Caco-2 (cell line): ENCODE measurements at regions of chr5 and their contacts with region 1.

Region 1: DNA sequence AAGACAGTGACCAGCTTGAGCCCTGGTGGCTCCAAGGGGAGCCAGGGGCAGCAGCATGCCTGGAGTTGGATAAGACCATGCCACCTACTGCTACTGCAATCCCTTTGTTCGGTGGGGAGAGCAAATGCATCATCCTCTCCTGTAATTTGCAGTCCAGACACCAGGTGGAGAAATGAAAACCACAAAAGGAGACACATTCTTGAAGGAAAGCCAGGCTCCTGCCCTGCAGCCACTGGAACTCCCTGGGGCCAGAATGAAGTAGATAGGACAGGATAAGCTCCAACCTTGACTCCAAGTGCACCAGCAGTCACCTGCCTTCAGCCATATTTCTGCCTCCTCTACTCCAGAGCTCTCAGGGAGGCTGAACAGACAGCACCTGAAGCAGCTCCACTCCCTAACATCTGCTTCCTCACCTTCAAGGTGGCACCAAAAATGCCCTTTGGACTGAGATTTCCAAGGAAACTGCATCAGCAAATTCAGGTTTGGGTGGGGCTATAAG is 65.1 kb upstream of the IQGAP2 start:
- DNase-seq: peak; percentile 83 to 89
- H3K4me3 ChIP-seq: no peak overlapping the region
- H3K4me3 Mint-ChIP-seq: no peak overlapping the region
- H3K27ac Mint-ChIP-seq: peak overlapping the region; percentile 69
- H3K4me1 ChIP-seq: peaks cover 35% of the 10 kb centered on the region
- H3K4me1 Mint-ChIP-seq: peaks cover 32% of the 10 kb centered on the region
- H3K27me3 ChIP-seq: no peaks in the 10 kb centered on the region
- H3K27me3 Mint-ChIP-seq: no peaks in the 10 kb centered on the region
- CTCF ChIP-seq: peak; percentile 52 to 58

Region 2: DNA sequence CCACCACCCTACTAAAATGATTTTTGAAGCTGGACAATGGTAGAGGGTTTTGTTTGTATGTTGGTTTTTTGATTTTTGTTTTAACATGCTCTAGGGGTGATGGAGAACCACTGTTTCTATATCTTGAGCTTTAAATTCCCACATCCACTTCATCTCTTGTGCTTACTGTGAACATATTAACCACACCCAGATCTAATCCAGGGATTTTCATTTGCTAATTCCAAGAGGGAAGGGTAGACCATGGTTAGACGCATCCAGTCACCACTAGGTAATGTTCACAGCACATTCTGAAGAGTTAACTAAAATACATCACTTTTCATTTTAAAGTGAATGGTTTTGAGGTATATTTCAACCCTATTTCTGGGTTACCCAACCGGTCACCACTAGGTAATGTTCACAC is 28.6 kb after region 1 on chr5:
- CTCF ChIA-PET with region 1: interaction called, 13 read pairs
- POLR2A ChIA-PET with region 1: no interaction called
- intact Hi-C with region 1: no loop called
- DNase-seq: no peak
- H3K4me3 ChIP-seq: no peak overlapping the region
- H3K4me3 Mint-ChIP-seq: no peak overlapping the region
- H3K27ac Mint-ChIP-seq: no peak overlapping the region
- H3K4me1 ChIP-seq: peaks cover 4% of the 10 kb centered on the region; the same call in 1 of the 2 replicates
- H3K4me1 Mint-ChIP-seq: peaks cover 12% of the 10 kb centered on the region
- H3K27me3 ChIP-seq: no peaks in the 10 kb centered on the region
- H3K27me3 Mint-ChIP-seq: no peaks in the 10 kb centered on the region
- CTCF ChIP-seq: no peak

Region 3: GRCh38 chr5:76372323-76373054 is 34.5 kb after region 1 on chr5:
- CTCF ChIA-PET with region 1: no interaction called
- POLR2A ChIA-PET with region 1: no interaction called
- intact Hi-C with region 1: loop called (anchors 1 kb)
- DNase-seq: peak; percentile 71 to 80
- H3K4me3 ChIP-seq: no peak overlapping the region
- H3K4me3 Mint-ChIP-seq: peak overlapping the region; percentile 20
- H3K27ac Mint-ChIP-seq: peak overlapping the region; percentile 73
- H3K4me1 ChIP-seq: peaks cover 18% of the 10 kb centered on the region
- H3K4me1 Mint-ChIP-seq: peaks cover 33% of the 10 kb centered on the region
- H3K27me3 ChIP-seq: no peaks in the 10 kb centered on the region
- H3K27me3 Mint-ChIP-seq: no peaks in the 10 kb centered on the region
- CTCF ChIP-seq: no peak

Region 4: GRCh38 chr5:76544268-76544926 is 206.4 kb after region 1 on chr5:
- CTCF ChIA-PET with region 1: interaction called, 4 read pairs
- POLR2A ChIA-PET with region 1: no interaction called
- intact Hi-C with region 1: loop called (anchors 1 kb)
- DNase-seq: peak; percentile 69 to 77
- H3K4me3 ChIP-seq: no peak overlapping the region
- H3K4me3 Mint-ChIP-seq: no peak overlapping the region
- H3K27ac Mint-ChIP-seq: peak overlapping the region; percentile 51
- H3K4me1 ChIP-seq: peaks cover 76% of the 10 kb centered on the region
- H3K4me1 Mint-ChIP-seq: peaks cover 35% of the 10 kb centered on the region
- H3K27me3 ChIP-seq: no peaks in the 10 kb centered on the region
- H3K27me3 Mint-ChIP-seq: no peaks in the 10 kb centered on the region
- CTCF ChIP-seq: peak; percentile 68 to 87

Region 5: GRCh38 chr5:76582230-76583162 is 244.5 kb after region 1 on chr5:
- CTCF ChIA-PET with region 1: interaction called, 3 read pairs
- POLR2A ChIA-PET with region 1: no interaction called
- intact Hi-C with region 1: loop called (anchors 1 kb)
- DNase-seq: no peak
- H3K4me3 ChIP-seq: no peak overlapping the region
- H3K4me3 Mint-ChIP-seq: no peak overlapping the region
- H3K27ac Mint-ChIP-seq: no peak overlapping the region
- H3K4me1 ChIP-seq: peaks cover 33% of the 10 kb centered on the region
- H3K4me1 Mint-ChIP-seq: peaks cover 21% of the 10 kb centered on the region
- H3K27me3 ChIP-seq: no peaks in the 10 kb centered on the region
- H3K27me3 Mint-ChIP-seq: no peaks in the 10 kb centered on the region
- CTCF ChIP-seq: no peak